Activated T-helper 2 cell treated with anti-CD3 and anti-CD28 coated beads, Interferon-gamma antibody, Interleukin-2, Interleukin-4, amounts not matched to agents 10 μg/mL and 5 μg/mL and 100 μg/mL, durations not matched to agents 14 hours and 24 hours and 36 hours (primary cell): ENCODE measurements at regions of chr10 and their contacts with region 1.

Region 1: GRCh38 chr10:91856637-91857036 is 52.6 kb downstream of the FGFBP3 start:
- DNase-seq: no peak
- H3K4me3 Mint-ChIP-seq: no peak overlapping the region
- H3K27ac Mint-ChIP-seq: no peak overlapping the region
- H3K4me1 Mint-ChIP-seq: no peaks in the 10 kb centered on the region
- H3K27me3 Mint-ChIP-seq: no peaks in the 10 kb centered on the region

Region 2: DNA sequence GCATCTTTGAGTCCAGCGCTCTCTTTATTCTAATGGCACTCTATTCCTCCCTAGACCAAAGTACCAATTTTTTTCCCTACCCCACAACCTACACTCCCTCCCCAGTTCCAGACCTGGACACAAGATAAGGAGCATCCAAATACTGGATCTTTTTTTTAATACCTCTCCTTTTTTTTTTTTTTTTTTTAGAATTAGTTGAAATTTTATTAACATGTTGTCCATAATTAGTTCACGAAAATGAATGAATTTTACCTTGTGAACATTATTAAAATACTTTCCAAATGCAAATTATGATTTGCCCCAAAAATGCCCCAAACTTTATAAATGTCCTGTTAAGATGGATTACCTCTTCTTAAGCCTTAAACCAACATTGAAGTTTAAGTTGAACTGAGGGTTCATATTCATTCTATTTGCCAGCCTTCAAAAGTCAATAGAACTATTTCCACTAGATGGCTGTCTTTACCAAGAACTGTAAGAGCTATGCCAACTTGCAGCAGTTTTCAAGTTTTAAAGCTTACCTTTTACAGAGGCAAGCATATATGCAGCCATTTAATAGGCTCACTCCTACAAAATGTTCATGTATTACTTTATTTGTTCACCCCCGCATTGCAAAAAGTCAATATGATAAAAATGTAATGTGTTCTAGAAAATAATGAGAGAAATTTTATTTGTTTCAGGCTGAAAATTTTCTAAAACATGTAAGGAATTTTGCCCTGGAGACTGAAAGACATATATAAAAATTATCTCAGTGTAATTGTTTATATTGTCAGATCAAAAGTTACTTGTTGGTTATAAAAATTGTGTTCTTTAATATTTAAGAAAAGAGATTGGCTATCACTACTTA is 98.1 kb before region 1 on chr10:
- intact Hi-C with region 1: loop called (anchors 10 kb)
- DNase-seq: no peak
- H3K4me3 Mint-ChIP-seq: no peak overlapping the region
- H3K27ac Mint-ChIP-seq: no peak overlapping the region
- H3K4me1 Mint-ChIP-seq: no peaks in the 10 kb centered on the region
- H3K27me3 Mint-ChIP-seq: peaks cover 49% of the 10 kb centered on the region

Region 3: GRCh38 chr10:91820144-91820543 is 36.5 kb before region 1 on chr10:
- intact Hi-C with region 1: no loop called
- DNase-seq: no peak
- H3K4me3 Mint-ChIP-seq: no peak overlapping the region
- H3K27ac Mint-ChIP-seq: no peak overlapping the region
- H3K4me1 Mint-ChIP-seq: no peaks in the 10 kb centered on the region
- H3K27me3 Mint-ChIP-seq: no peaks in the 10 kb centered on the region

Region 4: DNA sequence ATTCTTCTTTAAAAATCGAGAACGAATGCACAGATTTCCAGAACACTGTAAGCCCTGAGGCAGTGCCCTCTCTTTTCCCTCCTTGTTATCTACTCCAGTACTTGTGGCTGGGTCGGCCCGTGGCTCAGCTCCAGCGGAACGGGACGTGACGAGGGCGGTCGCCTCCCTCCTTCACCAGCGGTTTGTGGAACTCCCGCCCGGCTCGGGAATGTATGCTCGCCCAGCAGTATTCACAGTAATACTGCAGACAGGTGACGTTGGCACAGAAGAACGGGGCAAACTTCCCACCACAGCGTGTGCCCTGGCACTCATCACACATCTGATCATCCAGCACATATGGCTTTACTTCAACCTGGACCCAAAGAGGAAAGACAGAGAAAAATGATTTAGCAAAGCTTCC is 195.5 kb after region 1 on chr10:
- intact Hi-C with region 1: no loop called
- DNase-seq: no peak
- H3K4me3 Mint-ChIP-seq: no peak overlapping the region
- H3K27ac Mint-ChIP-seq: no peak overlapping the region
- H3K4me1 Mint-ChIP-seq: peaks cover 10% of the 10 kb centered on the region
- H3K27me3 Mint-ChIP-seq: no peaks in the 10 kb centered on the region

Region 5: DNA sequence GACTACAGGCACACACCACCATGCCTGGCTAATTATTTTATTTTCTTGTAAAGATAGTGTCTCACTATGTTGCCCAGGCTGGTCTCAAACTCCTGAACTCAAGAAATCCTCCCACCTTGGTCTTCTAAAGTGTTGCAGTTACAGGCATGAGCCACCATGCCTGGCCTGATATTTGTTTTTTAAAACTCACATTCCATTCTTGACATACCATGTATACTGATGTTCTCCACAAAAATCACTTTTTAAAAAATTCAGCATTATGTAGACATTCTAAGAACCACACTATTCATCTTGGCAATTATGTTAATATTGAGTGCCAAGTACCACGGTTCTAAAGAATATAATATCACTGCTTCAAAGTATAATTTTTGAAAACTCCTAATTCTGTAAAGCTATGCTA is 673.8 kb after region 1 on chr10:
- intact Hi-C with region 1: no loop called
- DNase-seq: no peak
- H3K4me3 Mint-ChIP-seq: no peak overlapping the region
- H3K27ac Mint-ChIP-seq: no peak overlapping the region
- H3K4me1 Mint-ChIP-seq: no peaks in the 10 kb centered on the region
- H3K27me3 Mint-ChIP-seq: no peaks in the 10 kb centered on the region